Naive thymus-derived CD4-positive, alpha-beta T cell (primary cell): ENCODE measurements at regions of chr2 and their contacts with region 1.

Region 1: DNA sequence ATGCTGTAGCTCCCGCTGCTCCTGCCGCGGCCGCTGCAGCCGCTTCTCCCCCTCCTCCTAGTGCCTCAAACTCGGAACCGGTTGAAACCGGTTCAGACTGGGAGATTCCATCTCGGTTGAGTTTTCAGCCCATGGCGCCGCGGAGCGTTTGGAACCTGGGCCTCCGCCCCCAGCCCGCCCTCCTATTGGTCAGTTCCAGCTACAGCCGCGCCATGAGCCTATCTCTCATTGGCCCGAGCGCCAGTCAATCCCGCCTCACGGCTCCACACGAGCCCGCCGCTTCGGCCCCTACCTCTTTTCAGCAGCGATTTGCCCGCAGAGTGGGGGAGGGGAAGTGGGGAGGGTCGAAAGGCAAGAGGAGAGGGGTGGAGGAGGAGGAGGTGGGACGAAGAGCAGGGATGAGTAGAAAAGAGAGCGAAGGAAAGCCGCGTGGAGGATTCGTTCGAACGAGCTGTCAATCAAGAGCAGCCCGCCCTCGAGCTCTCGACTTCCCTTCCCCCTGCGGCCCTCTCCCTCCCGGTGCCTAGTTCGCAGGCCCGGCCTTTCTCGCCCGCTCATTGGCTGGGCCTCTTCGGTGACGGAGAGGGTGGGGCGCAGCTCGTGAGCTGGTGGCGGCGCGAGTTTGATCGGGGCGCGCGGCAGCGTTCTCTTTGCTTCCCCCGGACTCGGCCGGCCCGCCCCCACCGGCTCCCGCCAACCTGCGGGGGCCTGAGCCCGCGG is at the start of gene XPO1:
- DNase-seq: peak; percentile 95 to 100 (median 99)
- ATAC-seq: peak; percentile 89
- H3K4me3 ChIP-seq: peak within 1 kb of the TSS; percentile 96
- H3K4me3 Mint-ChIP-seq: peak within 1 kb of the TSS; percentile 89 to 100 (median 98)
- H3K27ac ChIP-seq: peak within 1 kb of the TSS; percentile 98
- H3K27ac Mint-ChIP-seq: peak within 1 kb of the TSS; percentile 94 to 100 (median 99)
- H3K4me1 ChIP-seq: peaks cover 19 to 24% of the 10 kb centered on the region in 2 donors
- H3K4me1 Mint-ChIP-seq: peaks cover 24 to 43% (median 35%) of the 10 kb centered on the region in 7 donors
- H3K27me3 ChIP-seq: no peaks in the 10 kb centered on the region
- H3K27me3 Mint-ChIP-seq: peaks cover 0 to 8% (median 0%) of the 10 kb centered on the region in 5 donors
- total RNA-seq, gene XPO1: 132 to 192 (median 181) TPM

Region 2: GRCh38 chr2:60756191-60757041 is 781.9 kb before region 1 on chr2 and contains the start of gene PAPOLG:
- CTCF ChIA-PET with region 1: no interaction called
- POLR2A ChIA-PET with region 1: interaction called, 5 read pairs
- intact Hi-C with region 1: loop called (anchors 5 kb)
- DNase-seq: peak; percentile 90 to 97 (median 93)
- ATAC-seq: peak; percentile 100
- H3K4me3 ChIP-seq: peak within 1 kb of the TSS; percentile 86
- H3K4me3 Mint-ChIP-seq: peak within 1 kb of the TSS; percentile 94 to 100 (median 98)
- H3K27ac ChIP-seq: peak within 1 kb of the TSS; percentile 85
- H3K27ac Mint-ChIP-seq: peak within 1 kb of the TSS; percentile 94 to 100 (median 98)
- H3K4me1 ChIP-seq: peaks cover 0 to 13% of the 10 kb centered on the region in 2 donors
- H3K4me1 Mint-ChIP-seq: peaks cover 24 to 53% (median 46%) of the 10 kb centered on the region in 7 donors
- H3K27me3 ChIP-seq: no peaks in the 10 kb centered on the region
- H3K27me3 Mint-ChIP-seq: no peaks in the 10 kb centered on the region
- total RNA-seq, gene PAPOLG: 15.1 to 42.4 (median 22.9) TPM

Region 3: DNA sequence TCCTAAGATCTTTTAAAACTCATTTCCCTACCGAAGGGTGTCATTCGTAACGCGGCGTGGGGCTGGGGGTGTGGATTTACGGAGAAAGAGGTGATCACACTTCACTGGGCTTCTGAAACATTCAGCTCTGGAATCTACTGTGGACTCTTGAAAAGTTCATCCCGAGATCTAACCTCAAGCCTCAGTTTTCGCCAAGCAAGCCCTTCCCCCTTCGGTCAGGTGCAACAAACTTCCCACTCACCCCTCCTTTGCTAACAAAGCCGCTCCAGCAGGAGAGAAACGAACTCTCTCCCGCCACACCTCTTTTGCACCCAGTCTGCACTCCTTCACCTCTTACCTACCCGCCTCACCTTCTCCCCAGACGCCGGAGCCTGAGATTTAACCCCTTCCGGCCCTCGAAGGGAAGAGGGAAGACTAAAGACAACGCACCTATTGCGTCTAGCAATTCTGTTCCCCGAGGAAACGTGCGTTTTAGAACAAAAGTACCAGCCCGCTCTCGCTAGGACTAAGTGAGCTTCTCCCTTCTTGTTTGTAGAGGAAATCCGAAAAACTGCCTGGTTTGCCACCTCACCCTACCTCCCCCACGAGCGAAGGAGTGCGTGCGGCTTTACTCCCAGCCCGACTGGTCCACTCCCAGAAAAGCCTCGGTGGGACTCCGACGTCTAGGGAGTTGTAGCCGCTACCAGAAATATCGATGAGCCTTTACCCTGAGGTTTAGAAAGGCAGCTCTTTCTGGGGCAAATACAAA is 521.4 kb before region 1 on chr2:
- CTCF ChIA-PET with region 1: no interaction called
- POLR2A ChIA-PET with region 1: no interaction called
- intact Hi-C with region 1: loop called (anchors 1 kb)
- DNase-seq: peak; percentile 41 to 75 (median 72)
- ATAC-seq: peak; percentile 79
- H3K4me3 ChIP-seq: peak overlapping the region; percentile 100
- H3K4me3 Mint-ChIP-seq: peak overlapping the region; percentile 93 to 100 (median 97)
- H3K27ac ChIP-seq: peak overlapping the region; percentile 75
- H3K27ac Mint-ChIP-seq: peak overlapping the region; percentile 90 to 99 (median 95)
- H3K4me1 ChIP-seq: peaks cover 14 to 20% of the 10 kb centered on the region in 2 donors
- H3K4me1 Mint-ChIP-seq: peaks cover 23 to 68% (median 48%) of the 10 kb centered on the region in 7 donors
- H3K27me3 ChIP-seq: no peaks in the 10 kb centered on the region
- H3K27me3 Mint-ChIP-seq: no peaks in the 10 kb centered on the region

Region 4: DNA sequence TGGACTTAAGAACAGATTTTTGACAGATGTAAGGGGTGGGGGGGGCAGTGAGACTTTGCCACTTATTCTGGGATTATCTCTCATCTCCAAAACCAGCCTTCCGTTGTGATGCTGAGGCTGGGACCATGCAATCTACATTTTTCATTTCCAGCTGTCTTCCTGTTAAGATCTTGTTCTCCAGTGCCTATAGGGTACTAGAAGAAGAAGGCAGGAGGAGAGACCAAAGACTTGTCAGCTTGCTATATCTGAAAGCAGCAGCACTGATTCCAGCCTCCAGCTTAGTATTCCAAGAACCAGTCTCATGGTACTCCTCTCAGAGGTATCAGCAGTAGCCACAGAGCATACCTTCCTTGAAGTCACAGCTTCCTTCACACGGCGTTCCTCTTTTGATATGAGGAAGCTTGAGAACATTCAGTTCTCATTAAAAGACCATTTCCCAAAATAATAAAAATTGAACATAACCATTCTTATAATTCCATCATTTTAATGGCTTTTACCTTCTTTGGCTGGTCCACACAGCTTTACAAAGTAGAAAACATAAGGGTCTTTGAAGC is 117.3 kb before region 1 on chr2:
- CTCF ChIA-PET with region 1: interaction called, 4 read pairs
- POLR2A ChIA-PET with region 1: interaction called, 21 read pairs
- intact Hi-C with region 1: loop called (anchors 1 to 2 kb)
- DNase-seq: no peak
- ATAC-seq: peak; percentile 42
- H3K4me3 ChIP-seq: no peak overlapping the region
- H3K4me3 Mint-ChIP-seq: peak overlapping the region in 7 of 10 donors; percentile 26 to 66 (median 52)
- H3K27ac ChIP-seq: peak overlapping the region; percentile 30
- H3K27ac Mint-ChIP-seq: peak overlapping the region in 8 of 9 donors; percentile 43 to 99 (median 76)
- H3K4me1 ChIP-seq: peaks cover 21 to 41% of the 10 kb centered on the region in 2 donors
- H3K4me1 Mint-ChIP-seq: peaks cover 38 to 73% (median 65%) of the 10 kb centered on the region in 7 donors
- H3K27me3 ChIP-seq: no peaks in the 10 kb centered on the region
- H3K27me3 Mint-ChIP-seq: no peaks in the 10 kb centered on the region

Region 5: DNA sequence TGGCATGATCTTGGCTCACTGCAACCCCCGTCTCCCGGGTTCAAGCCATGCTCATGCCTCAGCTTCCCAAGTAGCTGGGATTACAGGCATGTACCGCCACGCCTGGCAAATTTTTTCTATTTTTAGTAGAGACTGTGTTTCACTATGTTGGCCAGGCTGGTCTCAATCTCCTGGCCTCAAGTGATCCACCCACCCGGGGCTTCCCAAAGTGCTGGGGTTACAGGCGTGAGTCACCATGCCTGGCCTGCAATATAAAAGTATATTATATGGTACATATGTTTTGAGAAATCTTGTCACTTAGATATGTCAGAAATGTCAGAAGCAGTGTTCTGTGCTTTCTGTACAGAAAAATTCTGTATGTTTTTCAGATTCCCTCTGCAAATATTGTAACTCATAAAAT is 19.0 kb after region 1 on chr2:
- CTCF ChIA-PET with region 1: no interaction called
- POLR2A ChIA-PET with region 1: no interaction called
- intact Hi-C with region 1: no loop called
- DNase-seq: no peak
- ATAC-seq: no peak
- H3K4me3 ChIP-seq: no peak overlapping the region
- H3K4me3 Mint-ChIP-seq: no peak overlapping the region
- H3K27ac ChIP-seq: no peak overlapping the region
- H3K27ac Mint-ChIP-seq: no peak overlapping the region
- H3K4me1 ChIP-seq: no peaks in the 10 kb centered on the region
- H3K4me1 Mint-ChIP-seq: no peaks in the 10 kb centered on the region
- H3K27me3 ChIP-seq: no peaks in the 10 kb centered on the region
- H3K27me3 Mint-ChIP-seq: peaks cover 0 to 9% (median 0%) of the 10 kb centered on the region in 5 donors

Region 6: DNA sequence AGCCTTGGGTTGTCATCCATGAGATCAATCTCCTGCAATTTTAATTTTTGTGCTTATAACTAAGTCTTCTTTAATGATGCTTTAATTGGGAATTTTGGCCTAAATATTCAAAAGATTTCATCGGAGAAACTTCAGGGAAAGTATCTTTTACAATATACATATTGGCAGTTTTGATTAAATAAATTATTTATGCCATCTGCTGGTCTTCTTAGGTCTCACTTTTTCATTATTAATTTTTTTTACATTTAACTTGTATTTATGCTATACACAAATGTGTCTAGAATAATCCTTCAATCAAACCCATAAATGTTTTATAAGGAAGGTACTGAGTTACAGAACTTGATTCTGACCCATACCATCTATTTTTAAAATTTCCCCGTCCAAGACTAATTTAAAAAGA is 94.9 kb after region 1 on chr2:
- CTCF ChIA-PET with region 1: no interaction called
- POLR2A ChIA-PET with region 1: interaction called, 3 read pairs
- intact Hi-C with region 1: loop called in 1 of 2 experiments (anchors 1 kb)
- DNase-seq: no peak
- ATAC-seq: no peak
- H3K4me3 ChIP-seq: no peak overlapping the region
- H3K4me3 Mint-ChIP-seq: no peak overlapping the region
- H3K27ac ChIP-seq: no peak overlapping the region
- H3K27ac Mint-ChIP-seq: peak overlapping the region in 1 of 9 donors; percentile 10
- H3K4me1 ChIP-seq: no peaks in the 10 kb centered on the region
- H3K4me1 Mint-ChIP-seq: no peaks in the 10 kb centered on the region
- H3K27me3 ChIP-seq: no peaks in the 10 kb centered on the region
- H3K27me3 Mint-ChIP-seq: peaks cover 0 to 3% (median 0%) of the 10 kb centered on the region in 5 donors

Region 7: GRCh38 chr2:61789807-61790602 is 251.6 kb after region 1 on chr2:
- CTCF ChIA-PET with region 1: no interaction called
- POLR2A ChIA-PET with region 1: no interaction called
- intact Hi-C with region 1: loop called in 1 of 2 experiments (anchors 1 kb)
- DNase-seq: no peak
- ATAC-seq: no peak
- H3K4me3 ChIP-seq: no peak overlapping the region
- H3K4me3 Mint-ChIP-seq: no peak overlapping the region
- H3K27ac ChIP-seq: no peak overlapping the region
- H3K27ac Mint-ChIP-seq: no peak overlapping the region
- H3K4me1 ChIP-seq: no peaks in the 10 kb centered on the region
- H3K4me1 Mint-ChIP-seq: peaks cover 0 to 8% (median 4%) of the 10 kb centered on the region in 7 donors
- H3K27me3 ChIP-seq: no peaks in the 10 kb centered on the region
- H3K27me3 Mint-ChIP-seq: peaks cover 3 to 17% (median 7%) of the 10 kb centered on the region in 5 donors

Region 8: GRCh38 chr2:62195421-62196277 is 657.3 kb after region 1 on chr2 and contains the start of gene B3GNT2:
- CTCF ChIA-PET with region 1: no interaction called
- POLR2A ChIA-PET with region 1: no interaction called
- intact Hi-C with region 1: loop called in 1 of 2 experiments (anchors 1 kb)
- DNase-seq: peak; percentile 66 to 88 (median 80)
- ATAC-seq: peak; percentile 89
- H3K4me3 ChIP-seq: peak within 1 kb of the TSS; percentile 98
- H3K4me3 Mint-ChIP-seq: peak within 1 kb of the TSS; percentile 82 to 93 (median 89)
- H3K27ac ChIP-seq: peak within 1 kb of the TSS; percentile 86
- H3K27ac Mint-ChIP-seq: peak within 1 kb of the TSS in 7 of 9 donors; percentile 83 to 95 (median 91)
- H3K4me1 ChIP-seq: peaks cover 27 to 36% of the 10 kb centered on the region in 2 donors
- H3K4me1 Mint-ChIP-seq: peaks cover 28 to 44% (median 31%) of the 10 kb centered on the region in 7 donors
- H3K27me3 ChIP-seq: no peaks in the 10 kb centered on the region
- H3K27me3 Mint-ChIP-seq: peaks cover 0 to 6% (median 0%) of the 10 kb centered on the region in 5 donors
- total RNA-seq, gene B3GNT2: 16.9 to 37.0 (median 34.7) TPM